ENCODE measurements at regions of chr19 and their contacts with region 1.

Region 1: DNA sequence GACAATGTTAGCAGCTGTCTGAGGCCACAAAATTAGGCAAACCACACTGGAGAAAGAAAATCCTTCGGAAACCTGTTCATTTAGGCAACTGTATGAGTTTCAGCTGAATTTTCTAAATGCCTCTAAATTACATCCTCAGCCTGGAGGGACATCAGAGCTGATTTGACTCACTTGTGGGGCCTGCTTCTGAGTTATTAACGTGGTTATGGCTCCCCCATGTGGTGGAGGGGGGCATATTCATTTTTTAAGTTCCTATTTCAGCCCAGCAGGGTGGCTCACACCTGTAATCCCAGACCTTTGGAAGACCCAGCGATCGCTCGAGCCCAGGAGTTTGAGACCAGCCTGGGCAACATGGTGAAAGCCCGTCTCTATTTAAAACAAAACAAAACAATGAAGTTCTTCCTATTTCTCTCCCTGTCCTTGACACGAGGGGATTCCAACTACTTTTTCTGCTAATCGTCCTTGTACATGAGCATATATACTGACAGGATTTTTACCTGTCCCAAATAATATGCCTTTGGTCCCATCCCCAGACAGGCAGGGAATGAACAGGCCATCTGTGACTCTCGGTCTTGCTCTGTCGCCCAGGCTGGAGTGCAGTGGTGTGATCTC is 31.5 kb upstream of the HIF3A start:
- DNase-seq: no peak
- H3K4me3 ChIP-seq: no peak overlapping the region
- H3K27ac ChIP-seq: no peak overlapping the region
- H3K4me1 ChIP-seq: peaks cover 0 to 12% (median 4%) of the 10 kb centered on the region in 6 donors
- H3K27me3 ChIP-seq: peaks cover 0 to 88% (median 9%) of the 10 kb centered on the region in 7 donors
- CTCF ChIP-seq: peak; percentile 51 to 91 (median 83)
- POLR2A ChIP-seq: no peak

Region 2: GRCh38 chr19:46030812-46031550 is 234.3 kb before region 1 on chr19:
- intact Hi-C with region 1: loop called (anchors 2 kb)
- DNase-seq: no peak
- H3K4me3 ChIP-seq: no peak overlapping the region
- H3K27ac ChIP-seq: no peak overlapping the region
- H3K4me1 ChIP-seq: peaks cover 0 to 30% (median 6%) of the 10 kb centered on the region in 6 donors
- H3K27me3 ChIP-seq: peaks cover 0 to 71% (median 0%) of the 10 kb centered on the region in 7 donors
- CTCF ChIP-seq: no peak
- POLR2A ChIP-seq: no peak

Region 3: DNA sequence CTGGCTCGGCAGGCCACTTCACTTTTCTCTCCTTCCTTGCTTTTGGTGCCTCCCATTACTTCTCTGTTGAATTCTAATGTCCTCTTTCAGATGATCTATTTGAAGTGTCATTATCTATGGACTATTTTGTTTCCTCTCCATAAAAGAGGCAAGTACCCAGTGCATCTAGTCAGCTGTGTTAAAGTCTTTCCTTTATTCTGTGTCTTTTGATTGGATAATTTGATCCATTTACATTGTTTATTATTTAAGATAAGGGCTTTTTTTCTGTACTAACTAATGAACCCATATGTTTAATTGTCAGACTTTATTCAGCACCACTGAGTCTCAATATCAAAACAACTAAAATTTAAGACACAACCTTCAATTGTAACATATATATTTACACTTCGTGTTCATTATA is 177.2 kb before region 1 on chr19:
- intact Hi-C with region 1: loop called (anchors 5 kb)
- DNase-seq: no peak
- H3K4me3 ChIP-seq: no peak overlapping the region
- H3K27ac ChIP-seq: no peak overlapping the region
- H3K4me1 ChIP-seq: no peaks in the 10 kb centered on the region
- H3K27me3 ChIP-seq: peaks cover 0 to 40% (median 4%) of the 10 kb centered on the region in 7 donors
- CTCF ChIP-seq: no peak
- POLR2A ChIP-seq: no peak

Region 4: GRCh38 chr19:46309056-46309455 is 43.7 kb after region 1 on chr19:
- intact Hi-C with region 1: no loop called
- DNase-seq: no peak
- H3K4me3 ChIP-seq: no peak overlapping the region
- H3K27ac ChIP-seq: no peak overlapping the region
- H3K4me1 ChIP-seq: peaks cover 0 to 5% (median 0%) of the 10 kb centered on the region in 6 donors
- H3K27me3 ChIP-seq: no peaks in the 10 kb centered on the region
- CTCF ChIP-seq: no peak
- POLR2A ChIP-seq: no peak